Spleen (tissue), 13 donors: ENCODE measurements at regions of chr1 and their contacts with region 1.

Region 1: DNA sequence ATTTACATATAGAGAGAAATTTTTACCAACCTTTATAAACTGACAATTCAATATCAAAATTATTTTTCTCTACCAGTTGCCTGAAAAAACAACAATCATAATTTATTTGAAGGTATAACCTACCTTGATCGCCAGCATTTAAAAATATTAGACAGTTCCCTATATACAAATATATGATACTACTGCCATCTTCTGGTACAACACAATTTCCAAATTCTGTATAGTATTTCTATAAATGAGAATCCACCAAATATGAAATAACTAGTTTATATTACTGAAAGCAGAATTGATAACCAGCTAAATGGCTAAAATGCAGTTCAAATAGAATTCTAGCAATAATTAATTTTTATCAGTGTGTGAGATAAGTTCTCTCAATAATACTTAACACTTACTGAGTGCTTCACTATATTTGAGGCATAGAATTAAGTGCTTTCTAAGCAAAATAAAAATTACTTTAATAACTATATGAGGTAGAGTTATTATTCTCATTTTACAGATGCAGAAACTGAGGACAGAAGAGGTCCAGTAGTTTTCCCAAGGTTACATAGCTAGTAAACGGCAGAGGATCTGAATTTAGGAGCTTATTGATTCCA is 75.6 kb downstream of the PIGK start:
- DNase-seq: no peak
- H3K4me3 ChIP-seq: no peak overlapping the region
- H3K27ac ChIP-seq: no peak overlapping the region
- H3K4me1 ChIP-seq: no peaks in the 10 kb centered on the region
- H3K27me3 ChIP-seq: no peaks in the 10 kb centered on the region
- CTCF ChIP-seq: peak in 6 of 11 experiments; percentile 9 to 20 (median 14)
- POLR2A ChIP-seq: no peak

Region 2: DNA sequence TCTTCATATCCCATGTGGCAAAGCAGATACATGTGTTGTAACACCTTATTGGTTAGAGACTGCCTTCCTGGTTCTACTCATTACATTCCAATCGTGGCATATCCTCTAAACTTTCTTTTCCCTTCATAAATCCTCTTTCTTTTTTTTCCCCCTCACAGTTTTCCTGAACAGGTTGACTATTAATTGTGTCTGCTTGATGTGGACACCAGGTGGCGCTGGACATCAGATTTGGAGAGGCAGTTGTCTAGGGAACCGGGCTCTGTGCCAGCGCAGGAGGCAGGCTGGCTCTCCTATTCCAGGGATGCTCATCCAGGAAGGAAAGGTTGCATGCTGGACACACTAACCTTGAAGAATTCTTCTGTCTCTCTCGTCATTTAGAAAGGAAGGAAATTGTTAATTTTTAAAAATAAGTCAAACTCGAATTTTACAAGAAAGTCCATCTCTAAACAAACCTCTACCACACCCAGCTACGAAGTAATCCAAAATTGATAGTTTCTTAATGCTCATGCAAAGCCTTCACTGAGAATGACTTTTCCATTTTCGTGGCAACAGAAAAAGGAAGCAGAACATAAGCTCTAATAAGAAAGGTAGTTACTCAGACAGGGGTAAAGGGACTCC is 1152.0 kb before region 1 on chr1:
- intact Hi-C with region 1: loop called (anchors 5 kb)
- DNase-seq: peak; percentile 91
- H3K4me3 ChIP-seq: no peak overlapping the region
- H3K27ac ChIP-seq: no peak overlapping the region
- H3K4me1 ChIP-seq: no peaks in the 10 kb centered on the region
- H3K27me3 ChIP-seq: peaks cover 0 to 10% (median 0%) of the 10 kb centered on the region in 7 donors
- CTCF ChIP-seq: peak; percentile 25 to 81 (median 70)
- POLR2A ChIP-seq: no peak

Region 3: DNA sequence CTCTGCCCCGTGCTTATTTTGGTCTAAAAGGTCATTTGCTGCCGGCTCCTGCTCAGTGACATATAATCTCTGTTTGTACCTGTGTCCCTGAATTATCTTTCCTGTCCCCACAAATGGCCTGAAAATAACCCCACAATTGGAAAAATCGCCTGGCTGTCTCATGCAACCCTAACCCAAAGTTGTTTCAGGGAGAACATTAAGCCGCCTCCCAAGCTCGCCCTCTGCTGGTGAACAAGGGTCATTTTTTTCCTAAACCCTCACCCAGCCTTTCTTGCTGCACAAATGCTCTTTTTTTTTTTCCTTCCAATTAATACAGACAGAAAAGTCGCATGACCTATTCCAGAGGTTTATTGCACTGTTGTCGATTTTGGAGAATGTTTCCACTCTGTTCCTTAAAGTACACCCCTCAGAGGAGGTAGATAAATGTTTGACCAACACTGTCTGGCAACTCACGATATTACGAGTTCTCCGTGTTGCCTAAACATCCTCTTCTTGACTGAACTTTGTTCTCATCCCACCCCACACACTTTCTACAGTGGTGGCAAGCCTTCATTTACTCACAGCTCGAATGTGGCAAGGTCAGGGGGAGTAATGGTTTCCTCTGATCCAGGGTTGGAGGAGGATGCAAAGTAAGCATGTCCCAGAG is 390.2 kb after region 1 on chr1:
- intact Hi-C with region 1: loop called (anchors 5 kb)
- DNase-seq: peak; percentile 82
- H3K4me3 ChIP-seq: no peak overlapping the region
- H3K27ac ChIP-seq: no peak overlapping the region
- H3K4me1 ChIP-seq: peaks cover 0 to 20% (median 4%) of the 10 kb centered on the region in 6 donors
- H3K27me3 ChIP-seq: no peaks in the 10 kb centered on the region
- CTCF ChIP-seq: peak; percentile 48 to 84 (median 70)
- POLR2A ChIP-seq: no peak